H1 (cell line): ENCODE measurements at regions of chr7 and their contacts with region 1.

Region 1: GRCh38 chr7:129367700-129368388 is 66.4 kb upstream of the STRIP2 start:
- DNase-seq: peak; percentile 69 to 87
- H3K4me3 ChIP-seq: no peak overlapping the region
- H3K27ac ChIP-seq: no peak overlapping the region
- H3K4me1 ChIP-seq: peaks cover 2 to 9% (median 6%) of the 10 kb centered on the region in 4 experiments; a peak in 4 of 7 replicates
- H3K27me3 ChIP-seq: no peaks in the 10 kb centered on the region
- CTCF ChIP-seq: peak; percentile 71 to 88 (median 83)
- EP300 ChIP-seq: no peak
- POLR2A ChIP-seq: no peak
- RAD21 ChIP-seq: peak; percentile 82 to 89

Region 2: DNA sequence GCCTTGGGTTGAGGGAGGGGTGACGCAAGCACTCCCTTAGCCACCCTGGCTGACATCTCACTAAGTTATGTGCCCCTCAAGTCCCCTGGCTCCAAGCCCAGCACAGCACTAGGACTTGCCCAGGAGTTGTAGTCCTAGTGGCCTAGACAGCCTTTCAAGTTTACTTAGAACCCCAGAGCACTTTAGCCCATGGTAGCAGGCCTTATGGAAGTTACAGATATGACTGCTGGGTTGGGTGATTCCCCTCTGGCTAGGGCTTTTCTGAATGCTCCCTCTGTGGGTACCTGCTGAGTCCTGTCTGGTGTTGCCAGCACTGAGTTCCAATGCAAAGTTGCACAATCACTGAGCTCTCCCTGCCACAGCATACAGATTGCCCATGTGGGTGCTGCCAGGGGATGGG is 59.8 kb before region 1 on chr7:
- CTCF ChIA-PET with region 1: no interaction called
- POLR2A ChIA-PET with region 1: no interaction called
- DNase-seq: no peak
- H3K4me3 ChIP-seq: no peak overlapping the region
- H3K27ac ChIP-seq: no peak overlapping the region
- H3K4me1 ChIP-seq: no peaks in the 10 kb centered on the region
- H3K27me3 ChIP-seq: no peaks in the 10 kb centered on the region
- CTCF ChIP-seq: no peak
- EP300 ChIP-seq: no peak
- POLR2A ChIP-seq: no peak
- RAD21 ChIP-seq: no peak

Region 3: DNA sequence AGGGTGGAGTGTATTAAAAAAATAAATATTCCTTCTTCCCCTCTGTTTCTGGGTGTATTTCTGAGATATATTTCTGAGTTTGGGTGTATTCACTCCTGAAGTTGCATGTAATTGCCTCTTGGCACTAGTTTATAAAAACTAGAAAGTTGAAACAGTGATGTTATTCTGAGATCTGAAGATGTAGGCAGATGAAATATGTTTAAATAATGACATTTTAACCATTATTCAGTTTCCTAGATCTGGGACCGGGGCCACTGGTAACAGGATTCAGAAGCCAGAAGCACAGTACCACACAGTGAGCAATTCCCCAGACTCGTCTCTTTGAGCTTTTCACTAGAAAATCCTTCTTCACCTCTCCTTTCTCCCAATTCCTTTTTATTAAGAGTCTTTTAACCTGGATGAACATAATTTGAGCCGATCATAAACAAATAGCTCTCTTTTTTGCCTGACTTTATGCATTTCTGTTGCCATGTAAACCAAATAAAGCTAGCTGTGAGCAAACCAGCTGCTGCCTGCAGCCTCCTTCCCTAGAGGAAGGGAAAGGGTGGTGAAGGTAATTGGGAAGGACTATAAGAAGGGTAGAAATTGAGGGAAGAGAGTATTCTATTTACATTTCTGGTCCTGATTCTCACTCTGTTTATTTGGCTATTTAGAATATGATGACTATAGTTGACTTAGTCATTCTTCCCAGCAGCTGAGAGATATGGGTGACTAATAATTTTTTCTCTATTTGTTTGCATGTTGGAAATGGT is 35.4 kb before region 1 on chr7:
- CTCF ChIA-PET with region 1: interaction called, 11 read pairs
- POLR2A ChIA-PET with region 1: no interaction called
- DNase-seq: no peak
- H3K4me3 ChIP-seq: no peak overlapping the region
- H3K27ac ChIP-seq: no peak overlapping the region
- H3K4me1 ChIP-seq: no peaks in the 10 kb centered on the region
- H3K27me3 ChIP-seq: no peaks in the 10 kb centered on the region
- CTCF ChIP-seq: no peak
- EP300 ChIP-seq: no peak
- POLR2A ChIP-seq: no peak
- RAD21 ChIP-seq: no peak

Region 4: GRCh38 chr7:129389829-129390228 is 22.0 kb after region 1 on chr7:
- CTCF ChIA-PET with region 1: interaction called, 69 read pairs
- POLR2A ChIA-PET with region 1: no interaction called
- DNase-seq: no peak
- H3K4me3 ChIP-seq: no peak overlapping the region
- H3K27ac ChIP-seq: no peak overlapping the region
- H3K4me1 ChIP-seq: peaks cover 0 to 5% (median 1%) of the 10 kb centered on the region in 4 experiments; a peak in 2 of 7 replicates
- H3K27me3 ChIP-seq: no peaks in the 10 kb centered on the region
- CTCF ChIP-seq: no peak
- EP300 ChIP-seq: no peak
- POLR2A ChIP-seq: no peak
- RAD21 ChIP-seq: no peak

Region 5: GRCh38 chr7:129433847-129434674 is 66.2 kb after region 1 on chr7 and contains the start of gene STRIP2:
- CTCF ChIA-PET with region 1: interaction called, 37 read pairs
- POLR2A ChIA-PET with region 1: interaction called, 3 read pairs
- DNase-seq: peak; percentile 81 to 99
- H3K4me3 ChIP-seq: peak within 1 kb of the TSS; percentile 74 to 85 (median 76)
- H3K27ac ChIP-seq: 0 out of 2 replicates have a peak within 1 kb of the TSS, but pooled peaks have one; percentile 12
- H3K4me1 ChIP-seq: peaks cover 0 to 4% (median 2%) of the 10 kb centered on the region in 4 experiments; a peak in 3 of 7 replicates
- H3K27me3 ChIP-seq: peaks cover 0 to 9% (median 3%) of the 10 kb centered on the region in 4 experiments; a peak in 3 of 7 replicates
- CTCF ChIP-seq: peak; percentile 22 to 39 (median 34)
- EP300 ChIP-seq: no peak; a peak in 1 of 3 replicates
- POLR2A ChIP-seq: peak; percentile 78 to 82
- RAD21 ChIP-seq: peak in 1 of 2 experiments; percentile 14; a peak in 1 of 4 replicates
- total RNA-seq, gene STRIP2: 7.9 and 8.2 TPM in 2 replicates

Region 6: GRCh38 chr7:129468087-129468486 is 100.2 kb after region 1 on chr7:
- CTCF ChIA-PET with region 1: interaction called, 87 read pairs
- POLR2A ChIA-PET with region 1: no interaction called
- DNase-seq: no peak
- H3K4me3 ChIP-seq: no peak overlapping the region
- H3K27ac ChIP-seq: no peak overlapping the region
- H3K4me1 ChIP-seq: peaks cover 0 to 8% (median 6%) of the 10 kb centered on the region in 4 experiments; a peak in 4 of 7 replicates
- H3K27me3 ChIP-seq: no peaks in the 10 kb centered on the region
- CTCF ChIP-seq: no peak
- EP300 ChIP-seq: no peak
- POLR2A ChIP-seq: no peak
- RAD21 ChIP-seq: no peak

Region 7: GRCh38 chr7:129530795-129531391 is 163.0 kb after region 1 on chr7:
- CTCF ChIA-PET with region 1: no interaction called
- POLR2A ChIA-PET with region 1: no interaction called
- DNase-seq: no peak
- H3K4me3 ChIP-seq: no peak overlapping the region
- H3K27ac ChIP-seq: no peak overlapping the region
- H3K4me1 ChIP-seq: peaks cover 0 to 4% (median under 1%) of the 10 kb centered on the region in 4 experiments; a peak in 3 of 7 replicates
- H3K27me3 ChIP-seq: no peaks in the 10 kb centered on the region
- CTCF ChIP-seq: no peak
- EP300 ChIP-seq: no peak
- POLR2A ChIP-seq: no peak
- RAD21 ChIP-seq: no peak

Region 8: GRCh38 chr7:129750501-129750900 is 382.7 kb after region 1 on chr7:
- CTCF ChIA-PET with region 1: no interaction called
- POLR2A ChIA-PET with region 1: no interaction called
- DNase-seq: no peak
- H3K4me3 ChIP-seq: no peak overlapping the region
- H3K27ac ChIP-seq: no peak overlapping the region
- H3K4me1 ChIP-seq: 0 out of 7 replicates have a peak, but pooled peaks cover 0 to 2% (median 0%) of the 10 kb centered on the region in 4 experiments
- H3K27me3 ChIP-seq: no peaks in the 10 kb centered on the region
- CTCF ChIP-seq: no peak
- EP300 ChIP-seq: no peak
- POLR2A ChIP-seq: no peak
- RAD21 ChIP-seq: no peak

Region 9: GRCh38 chr7:129864042-129864441 is 496.2 kb after region 1 on chr7:
- CTCF ChIA-PET with region 1: no interaction called
- POLR2A ChIA-PET with region 1: no interaction called
- DNase-seq: no peak
- H3K4me3 ChIP-seq: no peak overlapping the region
- H3K27ac ChIP-seq: no peak overlapping the region
- H3K4me1 ChIP-seq: peaks cover 2 to 15% (median 8%) of the 10 kb centered on the region in 4 experiments
- H3K27me3 ChIP-seq: no peaks in the 10 kb centered on the region
- CTCF ChIP-seq: no peak
- EP300 ChIP-seq: no peak
- POLR2A ChIP-seq: no peak
- RAD21 ChIP-seq: no peak